Activated CD4-positive, alpha-beta T cell treated with anti-CD3 and anti-CD28 coated beads for 36 hours (primary cell): ENCODE measurements at regions of chr12 and their contacts with region 1.

Region 1: GRCh38 chr12:11486623-11487444 is 91.5 kb upstream of the PRB2 start:
- DNase-seq: peak; percentile 90
- ATAC-seq: peak; percentile 86
- H3K4me3 Mint-ChIP-seq: no peak overlapping the region
- H3K27ac Mint-ChIP-seq: no peak overlapping the region
- H3K4me1 Mint-ChIP-seq: peaks cover 5% of the 10 kb centered on the region
- H3K27me3 Mint-ChIP-seq: no peaks in the 10 kb centered on the region

Region 2: DNA sequence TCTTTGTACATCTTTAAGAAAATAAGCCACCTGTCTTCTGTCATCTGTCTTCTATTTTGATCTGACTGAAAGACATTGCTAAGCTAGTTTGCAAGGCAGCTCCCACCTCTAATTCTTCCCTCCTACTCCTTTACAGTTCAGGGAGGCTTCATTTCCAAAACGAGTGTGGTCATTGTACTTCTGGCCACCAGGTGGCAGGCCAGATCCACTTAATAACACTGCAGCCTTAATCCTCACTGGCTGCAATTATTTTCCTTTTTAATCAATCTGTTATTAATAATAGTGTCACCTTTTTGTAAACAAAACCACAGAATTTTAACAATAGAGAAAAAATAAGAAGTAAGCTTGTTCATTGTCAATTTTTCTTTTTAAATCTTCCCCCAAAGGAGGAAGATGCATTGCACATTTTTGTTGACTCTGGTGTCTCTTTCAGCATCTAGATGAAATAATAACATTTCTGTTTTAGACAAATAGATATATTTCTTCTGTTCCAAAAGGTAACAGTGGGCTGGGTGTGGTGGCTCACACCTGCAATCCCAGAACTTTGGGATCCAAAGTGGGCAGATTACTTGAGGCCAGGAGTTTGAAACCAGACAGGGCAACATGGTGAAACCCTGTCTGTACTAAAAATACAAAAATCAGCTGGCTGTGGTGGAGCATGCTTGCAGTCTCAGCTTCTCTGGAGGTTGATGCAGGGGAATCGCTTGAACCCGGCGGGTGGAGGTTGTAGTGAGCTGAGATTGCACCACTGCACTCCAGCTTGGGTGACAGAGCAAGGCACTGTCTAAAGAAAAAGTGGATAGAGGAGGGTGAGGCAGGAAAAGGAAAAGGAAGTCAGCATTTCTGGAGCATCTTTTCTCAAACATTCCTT is 1250.8 kb before region 1 on chr12:
- CTCF ChIA-PET with region 1: no interaction called
- POLR2A ChIA-PET with region 1: no interaction called
- intact Hi-C with region 1: loop called in 1 of 2 experiments (anchors 1 kb)
- DNase-seq: peak; percentile 57
- ATAC-seq: no peak
- H3K4me3 Mint-ChIP-seq: no peak overlapping the region
- H3K27ac Mint-ChIP-seq: no peak overlapping the region
- H3K4me1 Mint-ChIP-seq: no peaks in the 10 kb centered on the region
- H3K27me3 Mint-ChIP-seq: peaks cover 11% of the 10 kb centered on the region

Region 3: DNA sequence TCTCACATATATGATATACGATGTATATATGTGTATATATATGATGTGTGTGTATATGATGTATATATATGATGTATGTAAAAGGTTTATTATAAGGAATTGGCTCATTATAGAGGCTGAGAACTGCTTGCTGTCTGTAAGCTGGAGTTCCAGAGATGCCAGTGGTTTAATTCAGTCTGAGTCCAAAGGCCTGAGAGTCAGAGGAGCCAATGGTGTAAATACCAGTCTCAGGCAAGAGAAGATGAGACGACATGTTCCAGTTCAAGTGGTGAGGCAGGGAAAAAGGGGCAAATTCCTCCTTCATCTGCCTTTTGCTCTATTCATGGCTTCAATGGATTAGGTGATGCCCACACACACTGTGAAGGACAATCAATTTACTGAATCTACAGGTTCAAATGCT is 795.9 kb before region 1 on chr12:
- CTCF ChIA-PET with region 1: no interaction called
- POLR2A ChIA-PET with region 1: no interaction called
- intact Hi-C with region 1: no loop called
- DNase-seq: no peak
- ATAC-seq: no peak
- H3K4me3 Mint-ChIP-seq: no peak overlapping the region
- H3K27ac Mint-ChIP-seq: no peak overlapping the region
- H3K4me1 Mint-ChIP-seq: no peaks in the 10 kb centered on the region
- H3K27me3 Mint-ChIP-seq: peaks cover 3% of the 10 kb centered on the region

Region 4: DNA sequence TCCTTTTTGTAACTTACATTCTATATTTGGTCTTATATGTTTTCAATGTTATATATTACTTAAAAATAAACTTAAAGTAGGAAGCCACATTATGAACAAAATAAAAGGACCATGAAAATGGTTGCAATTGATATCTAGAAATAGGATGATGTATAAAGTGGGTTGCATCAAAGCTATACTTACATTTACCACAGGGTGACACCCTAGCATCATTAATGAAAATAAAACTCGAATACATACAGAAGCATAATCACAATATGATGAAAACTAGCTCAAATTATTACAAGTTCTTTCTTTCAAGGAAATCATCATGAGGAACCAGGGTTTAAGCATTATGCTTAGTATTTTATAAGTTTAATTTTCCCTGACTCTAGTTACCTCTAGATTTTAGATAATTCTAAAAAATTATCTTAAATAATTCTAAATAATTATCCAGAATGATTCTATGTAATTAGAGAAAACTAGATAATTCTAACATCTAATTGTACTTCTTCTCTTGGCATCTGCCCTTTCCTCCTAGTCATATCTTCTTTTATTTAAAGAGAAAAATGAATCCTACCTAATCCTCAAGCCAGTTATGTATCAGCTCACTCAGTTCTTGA is 715.6 kb before region 1 on chr12:
- CTCF ChIA-PET with region 1: interaction called, 99 read pairs
- POLR2A ChIA-PET with region 1: no interaction called
- intact Hi-C with region 1: loop called (anchors 1 kb)
- DNase-seq: no peak
- ATAC-seq: no peak
- H3K4me3 Mint-ChIP-seq: no peak overlapping the region
- H3K27ac Mint-ChIP-seq: no peak overlapping the region
- H3K4me1 Mint-ChIP-seq: no peaks in the 10 kb centered on the region
- H3K27me3 Mint-ChIP-seq: peaks cover 33% of the 10 kb centered on the region

Region 5: DNA sequence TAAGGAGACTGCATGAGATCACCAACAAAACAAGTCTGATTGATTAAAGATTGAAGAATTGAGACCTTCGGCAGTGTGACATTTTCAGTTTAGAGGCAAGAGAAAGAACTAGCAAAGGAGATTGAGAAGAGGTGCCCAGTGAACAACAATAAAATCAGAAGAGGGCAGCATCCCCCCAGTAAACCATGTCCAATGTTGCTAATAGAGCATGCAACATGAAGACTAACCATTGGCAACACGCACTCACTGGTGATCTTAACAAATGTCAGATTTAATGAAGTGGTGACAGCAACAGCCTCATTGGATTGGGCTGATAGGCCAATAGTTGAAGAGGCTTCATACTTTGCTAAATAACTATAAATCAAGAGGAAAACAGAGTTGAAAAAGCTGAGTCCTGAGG is 527.0 kb before region 1 on chr12:
- CTCF ChIA-PET with region 1: no interaction called
- POLR2A ChIA-PET with region 1: no interaction called
- intact Hi-C with region 1: loop called (anchors 5 to 10 kb)
- DNase-seq: no peak
- ATAC-seq: no peak
- H3K4me3 Mint-ChIP-seq: no peak overlapping the region
- H3K27ac Mint-ChIP-seq: no peak overlapping the region
- H3K4me1 Mint-ChIP-seq: peaks cover 33% of the 10 kb centered on the region
- H3K27me3 Mint-ChIP-seq: no peaks in the 10 kb centered on the region

Region 6: DNA sequence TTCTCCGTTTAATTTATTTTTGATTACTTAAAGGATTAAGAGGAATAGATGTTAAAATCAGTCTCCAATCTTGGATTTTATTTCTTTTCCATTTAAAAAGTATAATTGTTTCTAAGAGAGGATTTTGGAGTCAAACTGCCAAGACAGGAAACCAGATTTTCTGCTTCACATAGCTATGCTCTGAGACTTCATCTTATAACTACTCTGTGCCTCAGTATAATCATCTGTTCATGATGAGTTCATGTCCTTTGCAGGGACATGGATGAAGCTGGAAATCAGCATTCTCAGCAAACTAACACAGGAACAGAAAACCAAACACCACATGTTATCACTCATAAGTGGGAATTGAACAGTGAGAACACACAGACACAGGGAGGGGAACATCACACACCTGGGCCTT is 446.7 kb before region 1 on chr12:
- CTCF ChIA-PET with region 1: no interaction called
- POLR2A ChIA-PET with region 1: no interaction called
- intact Hi-C with region 1: no loop called
- DNase-seq: no peak
- ATAC-seq: no peak
- H3K4me3 Mint-ChIP-seq: no peak overlapping the region
- H3K27ac Mint-ChIP-seq: no peak overlapping the region
- H3K4me1 Mint-ChIP-seq: peaks cover 1% of the 10 kb centered on the region
- H3K27me3 Mint-ChIP-seq: no peaks in the 10 kb centered on the region

Region 7: DNA sequence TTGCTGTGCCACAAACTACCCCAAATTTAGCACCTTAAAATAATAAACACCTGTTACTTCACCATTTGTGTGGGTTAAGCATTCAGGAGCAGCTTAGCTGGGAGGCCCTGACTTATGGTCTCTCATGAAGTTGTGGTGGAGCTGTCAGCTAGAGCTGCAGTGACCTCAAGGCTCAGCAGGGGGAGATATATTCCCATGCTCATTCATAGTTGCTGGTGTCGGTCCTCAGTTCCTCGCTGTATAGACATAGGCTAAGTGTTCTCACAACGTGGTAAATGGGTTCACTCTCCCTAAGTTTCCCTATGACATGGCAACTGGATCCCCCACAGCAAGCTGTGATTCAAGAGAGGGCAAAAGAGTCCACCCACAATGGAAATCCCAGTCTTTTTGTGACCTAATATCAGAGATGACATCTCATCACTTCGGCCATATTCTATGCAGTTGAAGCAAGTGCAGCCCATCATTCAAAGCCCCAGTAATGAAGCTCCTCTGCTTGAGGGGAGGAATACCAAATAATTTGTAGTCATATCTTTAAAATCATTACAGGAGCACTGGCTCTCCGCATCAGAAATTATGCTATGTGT is 258.4 kb before region 1 on chr12:
- CTCF ChIA-PET with region 1: interaction called, 12 read pairs
- POLR2A ChIA-PET with region 1: no interaction called
- intact Hi-C with region 1: loop called (anchors 1 kb)
- DNase-seq: peak; percentile 51
- ATAC-seq: peak; percentile 47
- H3K4me3 Mint-ChIP-seq: no peak overlapping the region
- H3K27ac Mint-ChIP-seq: no peak overlapping the region
- H3K4me1 Mint-ChIP-seq: no peaks in the 10 kb centered on the region
- H3K27me3 Mint-ChIP-seq: no peaks in the 10 kb centered on the region